ENCODE measurements at regions of chr18 and their contacts with region 1.

Region 1: GRCh38 chr18:58529714-58530354 is 99.1 kb downstream of the ALPK2 start:
- DNase-seq: peak; percentile 63
- H3K4me3 ChIP-seq: no peak overlapping the region
- H3K27ac ChIP-seq: no peak overlapping the region
- H3K4me1 ChIP-seq: no peaks in the 10 kb centered on the region
- H3K27me3 ChIP-seq: no peaks in the 10 kb centered on the region
- CTCF ChIP-seq: peak; percentile 35 to 91 (median 74)
- POLR2A ChIP-seq: no peak

Region 2: DNA sequence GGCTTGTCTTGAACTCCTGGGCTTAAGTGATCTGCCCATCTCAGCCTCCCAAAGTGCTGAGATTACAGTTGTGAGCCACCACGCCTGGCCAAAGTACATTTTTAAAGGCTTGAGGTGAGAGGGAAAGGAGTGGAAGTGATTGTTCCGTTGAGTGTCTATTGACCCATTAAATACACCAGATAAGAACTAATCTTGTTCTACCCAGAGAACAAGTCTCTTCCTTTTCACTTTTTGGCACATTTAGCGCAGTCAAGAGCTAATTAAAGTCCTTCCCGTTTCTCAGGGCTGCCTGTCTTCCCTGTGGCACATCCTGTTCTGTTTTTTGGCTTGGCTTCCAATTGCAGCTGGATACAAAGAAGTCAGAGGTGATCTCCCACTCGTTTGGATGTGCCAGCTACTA is 73.2 kb before region 1 on chr18:
- intact Hi-C with region 1: no loop called
- DNase-seq: no peak
- H3K4me3 ChIP-seq: no peak overlapping the region
- H3K27ac ChIP-seq: no peak overlapping the region
- H3K4me1 ChIP-seq: no peaks in the 10 kb centered on the region
- H3K27me3 ChIP-seq: no peaks in the 10 kb centered on the region
- CTCF ChIP-seq: no peak
- POLR2A ChIP-seq: no peak

Region 3: GRCh38 chr18:58578835-58579560 is 49.2 kb after region 1 on chr18:
- intact Hi-C with region 1: no loop called
- DNase-seq: no peak
- H3K4me3 ChIP-seq: no peak overlapping the region
- H3K27ac ChIP-seq: no peak overlapping the region
- H3K4me1 ChIP-seq: no peaks in the 10 kb centered on the region
- H3K27me3 ChIP-seq: no peaks in the 10 kb centered on the region
- CTCF ChIP-seq: no peak
- POLR2A ChIP-seq: no peak

Region 4: DNA sequence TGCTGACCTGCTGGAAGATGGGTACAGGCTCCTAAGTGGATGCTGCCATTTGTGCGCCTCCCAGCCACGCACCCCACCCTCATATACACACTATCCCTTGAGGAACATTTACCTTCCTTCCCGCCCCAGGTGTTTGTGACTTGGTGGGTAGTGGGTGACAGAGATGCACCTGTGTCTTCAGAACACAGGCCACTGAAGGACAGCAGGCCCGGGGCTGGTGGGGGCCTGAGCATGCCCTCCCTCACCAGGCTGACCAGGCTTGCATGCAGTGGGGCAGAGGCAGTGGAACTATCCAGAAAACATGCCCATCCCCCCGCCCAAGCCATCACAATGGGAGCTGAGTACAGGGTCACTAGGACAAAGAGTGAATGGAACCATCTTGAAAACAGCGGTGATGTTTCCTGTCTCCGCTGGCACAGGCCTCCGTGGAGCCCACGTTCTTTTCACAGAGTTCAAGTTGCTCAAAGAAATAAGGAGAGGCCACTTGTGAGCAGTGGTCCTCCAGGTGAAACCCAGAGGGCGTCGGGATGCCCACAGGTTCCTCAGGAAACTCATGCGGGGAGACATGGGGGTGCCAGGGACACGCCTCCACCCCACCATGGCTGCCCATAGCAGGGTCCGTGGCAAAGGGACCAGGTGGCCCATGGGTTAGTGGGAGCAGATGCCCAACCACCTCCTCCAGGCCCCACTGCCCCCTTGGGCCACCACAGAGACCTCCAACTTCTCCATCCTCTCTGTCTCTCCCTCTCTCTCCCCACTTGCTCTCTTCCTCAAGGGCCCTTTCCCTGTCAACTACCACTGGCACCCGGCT is 232.3 kb after region 1 on chr18:
- intact Hi-C with region 1: loop called (anchors 2 kb)
- DNase-seq: no peak
- H3K4me3 ChIP-seq: no peak overlapping the region
- H3K27ac ChIP-seq: no peak overlapping the region
- H3K4me1 ChIP-seq: peaks cover 2% of the 10 kb centered on the region
- H3K27me3 ChIP-seq: no peaks in the 10 kb centered on the region
- CTCF ChIP-seq: no peak
- POLR2A ChIP-seq: no peak

Region 5: GRCh38 chr18:58928386-58928785 is 398.6 kb after region 1 on chr18:
- intact Hi-C with region 1: no loop called
- DNase-seq: no peak
- H3K4me3 ChIP-seq: no peak overlapping the region
- H3K27ac ChIP-seq: peak overlapping the region; percentile 48 to 66
- H3K4me1 ChIP-seq: no peaks in the 10 kb centered on the region
- H3K27me3 ChIP-seq: no peaks in the 10 kb centered on the region
- CTCF ChIP-seq: no peak
- POLR2A ChIP-seq: no peak

Measured in prostate gland (tissue), 2 donors.